Activated CD8-positive, alpha-beta T cell treated with anti-CD3 and anti-CD28 coated beads, Interleukin-2, amount 10 ng/mL, durations not matched to agents 7 days and 5 days (primary cell): ENCODE measurements at regions of chr3 and their contacts with region 1.

Region 1: GRCh38 chr3:152183473-152183872 is 85.3 kb upstream of the MBNL1 start:
- DNase-seq: peak; percentile 71
- ATAC-seq: peak; percentile 90
- H3K4me3 Mint-ChIP-seq: no peak overlapping the region
- H3K27ac Mint-ChIP-seq: no peak overlapping the region
- H3K4me1 Mint-ChIP-seq: peaks cover 44% of the 10 kb centered on the region
- H3K27me3 Mint-ChIP-seq: no peaks in the 10 kb centered on the region

Region 2: GRCh38 chr3:152193673-152194267 is 10.3 kb after region 1 on chr3:
- CTCF ChIA-PET with region 1: interaction called, 32 read pairs
- POLR2A ChIA-PET with region 1: interaction called, 5 read pairs
- DNase-seq: peak; percentile 66
- ATAC-seq: peak; percentile 75
- H3K4me3 Mint-ChIP-seq: peak overlapping the region; percentile 71
- H3K27ac Mint-ChIP-seq: peak overlapping the region; percentile 83
- H3K4me1 Mint-ChIP-seq: peaks cover 82% of the 10 kb centered on the region
- H3K27me3 Mint-ChIP-seq: no peaks in the 10 kb centered on the region

Region 3: DNA sequence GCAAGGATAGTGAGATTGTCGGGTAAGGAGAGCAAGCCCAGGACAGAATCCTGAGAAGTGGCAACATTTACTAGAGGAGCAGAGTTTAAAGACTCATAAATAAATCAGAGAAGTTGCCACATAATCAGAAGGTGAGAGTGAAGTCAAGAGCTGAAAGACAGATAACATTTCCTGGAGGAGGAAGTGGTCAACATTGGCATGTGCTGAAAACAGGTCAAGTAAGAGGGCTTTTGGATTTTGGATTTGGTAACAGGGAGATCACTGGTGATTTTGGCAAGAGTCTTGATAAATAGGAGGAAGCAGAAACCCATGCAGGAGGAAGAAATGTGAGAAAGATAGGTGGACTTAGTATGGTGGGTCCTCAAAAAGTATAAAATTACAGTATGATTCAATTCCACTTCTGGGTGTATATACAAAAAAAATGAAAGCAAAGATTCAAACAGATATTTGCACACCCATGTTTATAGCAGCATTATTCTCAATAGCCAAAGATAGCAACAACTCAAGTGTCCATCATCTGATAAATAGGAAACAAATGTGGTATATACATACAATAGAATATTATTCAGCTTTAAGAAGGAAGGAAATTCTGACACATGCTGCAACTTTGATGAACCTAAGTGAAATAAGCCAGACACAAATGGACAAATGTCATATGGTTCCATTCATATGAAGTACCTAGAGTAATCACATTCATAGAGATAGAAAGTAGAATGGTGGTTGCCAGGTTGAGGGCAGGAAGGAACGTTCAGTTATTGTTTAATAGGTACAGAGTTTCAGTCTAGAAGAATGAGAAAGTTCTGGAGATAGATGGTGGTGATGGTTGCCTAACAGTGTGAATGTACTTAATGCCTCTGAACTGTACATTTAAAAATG is 57.9 kb after region 1 on chr3:
- CTCF ChIA-PET with region 1: interaction called, 37 read pairs
- POLR2A ChIA-PET with region 1: interaction called, 6 read pairs
- DNase-seq: no peak
- ATAC-seq: peak; percentile 18
- H3K4me3 Mint-ChIP-seq: peak overlapping the region; percentile 92
- H3K27ac Mint-ChIP-seq: peak overlapping the region; percentile 91
- H3K4me1 Mint-ChIP-seq: peaks cover 58% of the 10 kb centered on the region
- H3K27me3 Mint-ChIP-seq: no peaks in the 10 kb centered on the region

Region 4: DNA sequence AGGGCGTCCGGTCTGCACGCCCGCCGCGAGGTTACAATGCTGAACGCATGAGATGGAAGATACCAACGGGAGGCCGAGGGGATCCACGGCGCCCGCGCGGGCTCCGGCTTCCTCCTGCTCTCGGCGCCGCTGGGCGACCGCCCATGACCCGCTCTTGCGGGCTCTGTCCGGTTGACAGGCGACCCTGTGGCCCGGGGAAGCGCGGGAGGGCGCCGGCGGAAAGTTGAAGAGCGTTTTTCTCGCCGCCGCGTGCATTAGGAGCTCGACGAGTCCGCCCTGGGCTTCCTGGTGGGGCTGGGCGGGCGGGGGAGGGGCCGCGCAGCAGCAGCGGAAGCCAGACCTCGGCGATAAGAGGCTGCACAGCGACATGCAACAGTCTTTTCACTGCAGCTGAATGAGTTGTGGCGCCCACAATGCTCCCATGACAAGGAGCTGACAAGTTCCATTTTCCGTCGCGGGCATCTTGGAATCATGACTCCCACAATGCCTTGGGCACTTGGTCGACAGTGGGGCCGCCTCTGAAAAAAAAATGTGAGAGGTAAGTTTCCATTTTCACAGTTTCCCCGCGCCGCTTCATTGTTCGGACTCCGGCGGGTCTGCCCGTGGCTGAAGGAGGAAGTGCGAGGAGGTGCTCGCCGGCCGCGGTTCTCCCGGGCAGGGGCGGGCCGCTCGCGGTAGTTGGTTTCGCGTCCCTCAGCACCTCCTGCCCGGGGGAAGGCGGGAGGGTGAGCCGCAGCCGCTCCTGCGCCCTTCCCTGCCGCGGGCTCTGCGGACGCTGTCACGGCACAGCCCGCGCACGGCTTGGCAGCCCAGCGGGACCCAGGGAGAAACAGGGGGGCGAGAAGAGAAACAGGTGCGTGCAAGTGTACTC is 85.3 kb after region 1 on chr3 and contains the start of gene MBNL1:
- CTCF ChIA-PET with region 1: interaction called, 13 read pairs
- POLR2A ChIA-PET with region 1: interaction called, 14 read pairs
- DNase-seq: peak; percentile 94
- ATAC-seq: peak; percentile 74
- H3K4me3 Mint-ChIP-seq: peak within 1 kb of the TSS; percentile 90
- H3K27ac Mint-ChIP-seq: peak within 1 kb of the TSS; percentile 87
- H3K4me1 Mint-ChIP-seq: peaks cover 49% of the 10 kb centered on the region
- H3K27me3 Mint-ChIP-seq: no peaks in the 10 kb centered on the region
- total RNA-seq, gene MBNL1: 469 to 504 TPM

Region 5: GRCh38 chr3:152302521-152303021 is 119.1 kb after region 1 on chr3:
- CTCF ChIA-PET with region 1: interaction called, 11 read pairs
- POLR2A ChIA-PET with region 1: no interaction called
- DNase-seq: no peak
- ATAC-seq: peak; percentile 62
- H3K4me3 Mint-ChIP-seq: peak overlapping the region; percentile 15
- H3K27ac Mint-ChIP-seq: peak overlapping the region; percentile 18
- H3K4me1 Mint-ChIP-seq: peaks cover 78% of the 10 kb centered on the region
- H3K27me3 Mint-ChIP-seq: no peaks in the 10 kb centered on the region

Region 6: DNA sequence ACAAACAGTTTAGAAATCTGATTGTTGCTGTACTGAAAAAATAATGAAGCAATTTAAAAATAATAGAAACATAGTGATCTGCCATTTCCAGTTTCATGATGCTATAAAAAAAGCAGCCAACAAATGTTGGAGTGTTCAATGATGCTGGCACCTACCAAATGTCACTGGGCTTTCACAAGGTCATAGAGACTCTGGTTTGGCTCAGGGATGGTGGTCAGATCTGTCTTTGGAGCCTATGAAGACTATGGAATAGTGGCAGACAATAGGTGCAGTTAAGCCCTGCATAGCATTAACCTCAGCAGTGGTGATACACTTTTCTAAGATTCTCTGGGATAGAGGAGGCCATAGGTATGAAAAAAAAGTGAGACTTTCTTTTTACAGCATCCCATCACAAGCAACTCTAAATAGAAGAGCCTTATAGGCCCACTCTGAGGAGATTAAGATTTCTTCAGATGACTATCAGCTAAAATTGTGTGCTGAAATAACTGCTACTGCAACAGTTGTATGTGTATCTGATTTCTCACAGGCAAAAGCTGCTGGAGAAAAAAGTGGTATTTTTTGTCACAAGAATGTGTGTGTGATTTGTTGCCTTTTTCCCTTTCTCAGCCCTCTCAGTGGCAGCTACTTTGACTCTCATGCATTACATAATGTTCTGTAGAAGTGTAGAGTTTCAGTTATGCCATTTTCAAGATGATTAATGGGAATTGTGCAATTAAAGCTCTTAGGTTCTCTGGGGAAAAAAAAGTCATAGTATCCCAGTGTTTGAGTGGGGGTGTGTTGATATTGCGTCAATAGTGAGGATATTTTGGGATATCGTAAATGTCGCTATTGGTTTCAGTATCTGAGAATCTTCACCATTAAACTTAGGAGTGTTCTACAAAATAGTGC is 222.7 kb after region 1 on chr3:
- CTCF ChIA-PET with region 1: no interaction called
- POLR2A ChIA-PET with region 1: no interaction called
- DNase-seq: no peak
- ATAC-seq: no peak
- H3K4me3 Mint-ChIP-seq: no peak overlapping the region
- H3K27ac Mint-ChIP-seq: no peak overlapping the region
- H3K4me1 Mint-ChIP-seq: peaks cover 48% of the 10 kb centered on the region
- H3K27me3 Mint-ChIP-seq: no peaks in the 10 kb centered on the region